PC-3 (cell line): ENCODE measurements at regions of chr16 and their contacts with region 1.

Region 1: DNA sequence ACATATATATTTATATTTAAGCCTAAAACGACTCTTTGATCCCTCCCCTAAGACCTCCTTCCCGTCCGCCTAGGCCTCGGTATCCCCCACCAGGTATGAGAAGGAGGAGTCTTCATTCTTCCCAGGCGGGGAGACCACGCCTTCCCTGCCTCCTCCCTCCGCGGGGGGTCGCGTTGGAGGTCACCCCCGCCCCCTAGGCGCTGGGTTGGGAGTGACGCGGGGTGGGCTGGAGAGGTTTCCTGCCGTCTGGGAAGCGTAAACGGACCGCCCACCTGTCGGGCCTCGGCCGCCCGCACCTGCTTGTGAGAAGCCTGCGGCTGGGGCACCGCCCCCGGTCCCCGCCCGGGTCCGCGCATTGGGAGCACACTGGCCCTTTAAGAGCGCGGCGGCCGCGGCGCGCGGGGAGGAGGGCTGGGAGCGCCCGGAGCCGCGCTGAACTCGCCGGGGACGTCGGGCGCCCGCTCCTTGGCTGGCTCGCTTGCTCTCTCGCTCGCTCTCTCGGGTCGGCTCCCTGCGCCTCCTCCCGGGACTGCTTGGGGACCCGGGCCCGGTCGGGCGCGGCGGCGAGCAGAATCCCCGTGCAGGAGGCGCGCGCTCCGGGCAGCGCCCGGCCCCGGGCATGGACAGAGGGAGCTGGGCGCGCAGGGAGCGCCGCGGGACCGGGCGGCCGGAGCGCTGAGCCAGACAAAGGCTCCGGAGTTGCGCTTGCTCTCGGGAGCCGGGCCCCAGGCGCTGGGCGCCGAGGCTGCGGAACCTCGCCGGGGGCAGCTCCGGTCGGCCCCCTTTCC is at the start of gene MMP15:
- DNase-seq: peak; percentile 68
- ATAC-seq: peak; percentile 60
- H3K4me3 ChIP-seq: peak within 1 kb of the TSS; percentile 69
- H3K27ac ChIP-seq: no peak within 1 kb of the TSS
- H3K4me1 ChIP-seq: peaks cover 29% of the 10 kb centered on the region
- H3K27me3 ChIP-seq: no peaks in the 10 kb centered on the region
- CTCF ChIP-seq: no peak
- total RNA-seq, gene MMP15: 6.3 and 9.4 TPM in 2 replicates

Region 2: DNA sequence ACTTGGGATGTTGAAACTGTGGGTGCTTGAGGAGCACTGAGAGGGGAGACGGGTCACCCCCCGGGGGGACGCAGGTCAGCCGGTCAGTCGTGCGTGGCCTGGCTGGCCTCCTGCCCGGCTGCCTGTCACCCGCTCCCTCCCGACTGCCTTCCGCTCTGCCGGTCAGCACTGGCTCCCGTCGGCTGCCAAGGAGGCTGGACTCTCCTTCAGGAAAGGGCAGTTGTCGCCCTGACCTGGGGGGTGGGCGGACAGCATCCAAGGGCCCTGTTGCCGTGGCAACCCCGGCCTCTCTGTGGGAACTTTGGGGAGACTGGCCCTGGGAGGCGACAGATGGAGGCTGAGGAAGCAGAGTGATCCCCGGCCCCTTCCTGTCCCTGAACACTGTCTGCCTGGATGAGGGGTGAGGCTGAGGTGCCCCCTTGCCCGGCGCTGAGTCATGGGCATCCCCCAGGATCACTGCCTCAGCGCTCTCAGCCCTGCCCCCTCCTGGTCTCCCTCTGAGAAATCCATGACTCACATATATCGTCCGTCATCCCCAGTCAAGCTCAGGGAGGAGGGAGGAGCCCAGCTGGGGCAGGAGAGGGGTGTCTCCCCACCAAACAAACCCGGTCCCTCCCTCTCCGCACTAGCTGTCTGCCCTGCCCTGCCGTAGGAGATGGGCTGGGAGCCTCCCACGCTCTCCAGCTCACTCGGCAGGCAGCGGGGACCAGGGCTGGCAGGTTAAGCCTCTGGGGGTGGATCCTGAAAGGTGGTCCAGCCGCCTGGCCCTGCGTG is 397.4 kb before region 1 on chr16 and contains the start of gene ADGRG1:
- CTCF ChIA-PET with region 1: no interaction called
- POLR2A ChIA-PET with region 1: interaction called, 13 read pairs
- intact Hi-C with region 1: no loop called
- DNase-seq: peak; percentile 92
- ATAC-seq: peak; percentile 76
- H3K4me3 ChIP-seq: peak within 1 kb of the TSS; percentile 71
- H3K27ac ChIP-seq: peak within 1 kb of the TSS; percentile 94
- H3K4me1 ChIP-seq: peaks cover 63% of the 10 kb centered on the region
- H3K27me3 ChIP-seq: no peaks in the 10 kb centered on the region
- CTCF ChIP-seq: peak; percentile 10; the same call in 1 of the 2 replicates
- total RNA-seq, gene ADGRG1: 33.7 and 41.5 TPM in 2 replicates

Region 3: DNA sequence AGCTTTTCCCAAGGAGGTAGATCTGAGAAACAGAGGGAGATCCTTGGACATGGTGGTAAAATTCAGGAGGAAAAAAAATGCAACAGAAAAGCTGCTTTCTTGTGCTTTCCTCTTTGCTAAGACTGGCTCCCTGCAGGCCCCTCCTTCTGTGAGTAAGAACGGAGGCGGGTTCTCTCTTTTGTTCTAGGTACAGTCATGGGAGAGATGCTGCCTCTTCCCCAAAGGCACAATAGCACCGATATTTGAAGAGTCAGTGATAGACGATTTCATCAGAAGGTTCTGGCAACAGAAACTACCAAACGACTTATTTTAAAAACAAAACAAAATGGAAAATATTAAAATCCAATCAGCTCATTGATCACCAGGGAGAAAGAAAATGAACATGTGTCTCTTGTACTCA is 190.6 kb before region 1 on chr16:
- CTCF ChIA-PET with region 1: no interaction called
- POLR2A ChIA-PET with region 1: no interaction called
- intact Hi-C with region 1: no loop called
- DNase-seq: peak; percentile 42
- ATAC-seq: peak; percentile 56
- H3K4me3 ChIP-seq: 0 out of 2 replicates have a peak overlapping the region, but pooled peaks have one; percentile 32
- H3K27ac ChIP-seq: no peak overlapping the region
- H3K4me1 ChIP-seq: peaks cover 8% of the 10 kb centered on the region
- H3K27me3 ChIP-seq: no peaks in the 10 kb centered on the region
- CTCF ChIP-seq: no peak

Region 4: DNA sequence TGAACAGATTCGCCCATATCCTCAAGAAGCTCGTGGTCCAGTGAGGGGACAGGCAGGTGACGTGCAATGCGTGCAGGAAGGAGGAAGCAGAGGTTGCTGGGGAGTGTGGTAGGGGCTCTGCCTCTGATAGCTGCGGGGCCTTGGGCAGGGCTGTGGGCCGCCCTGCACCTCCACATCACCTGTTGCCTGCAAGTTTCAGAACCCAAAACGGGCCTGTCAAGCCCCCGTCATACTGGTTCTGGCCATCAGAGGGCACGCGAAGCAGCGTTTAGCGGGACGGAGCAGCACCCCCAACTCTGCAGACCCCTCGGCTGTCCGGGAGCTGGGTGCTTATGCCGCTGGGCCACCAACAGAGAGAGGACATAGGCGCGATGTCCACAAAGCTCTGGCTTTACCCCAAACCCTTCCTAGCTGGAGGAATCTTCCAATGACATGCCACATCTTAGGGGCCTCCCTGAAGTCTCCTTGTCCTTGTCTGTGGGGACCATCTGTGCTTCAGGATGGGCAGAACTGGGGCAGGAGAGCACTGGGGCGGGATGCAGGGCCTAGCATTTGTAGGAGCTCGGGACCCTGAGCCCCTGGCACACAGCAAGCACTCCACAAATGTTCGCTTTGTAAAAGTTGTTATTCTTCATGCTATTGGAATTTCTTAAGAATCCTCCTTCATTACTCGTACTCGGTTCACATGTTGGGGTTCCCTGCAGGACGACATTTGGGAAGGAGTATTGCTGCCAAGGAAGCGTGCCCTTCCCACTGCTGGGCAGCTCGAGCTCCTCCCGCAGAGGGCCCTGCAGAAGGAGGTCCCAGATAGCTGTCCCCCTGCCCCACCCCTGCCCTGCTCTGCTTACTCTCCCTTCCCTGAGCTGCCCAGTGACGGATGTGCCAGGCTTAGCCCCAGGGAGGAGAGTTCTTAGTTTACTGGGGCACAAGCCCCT is 118.9 kb before region 1 on chr16:
- CTCF ChIA-PET with region 1: no interaction called
- POLR2A ChIA-PET with region 1: no interaction called
- intact Hi-C with region 1: no loop called
- DNase-seq: no peak
- ATAC-seq: no peak
- H3K4me3 ChIP-seq: no peak overlapping the region
- H3K27ac ChIP-seq: no peak overlapping the region
- H3K4me1 ChIP-seq: no peaks in the 10 kb centered on the region
- H3K27me3 ChIP-seq: no peaks in the 10 kb centered on the region
- CTCF ChIP-seq: no peak

Region 5: DNA sequence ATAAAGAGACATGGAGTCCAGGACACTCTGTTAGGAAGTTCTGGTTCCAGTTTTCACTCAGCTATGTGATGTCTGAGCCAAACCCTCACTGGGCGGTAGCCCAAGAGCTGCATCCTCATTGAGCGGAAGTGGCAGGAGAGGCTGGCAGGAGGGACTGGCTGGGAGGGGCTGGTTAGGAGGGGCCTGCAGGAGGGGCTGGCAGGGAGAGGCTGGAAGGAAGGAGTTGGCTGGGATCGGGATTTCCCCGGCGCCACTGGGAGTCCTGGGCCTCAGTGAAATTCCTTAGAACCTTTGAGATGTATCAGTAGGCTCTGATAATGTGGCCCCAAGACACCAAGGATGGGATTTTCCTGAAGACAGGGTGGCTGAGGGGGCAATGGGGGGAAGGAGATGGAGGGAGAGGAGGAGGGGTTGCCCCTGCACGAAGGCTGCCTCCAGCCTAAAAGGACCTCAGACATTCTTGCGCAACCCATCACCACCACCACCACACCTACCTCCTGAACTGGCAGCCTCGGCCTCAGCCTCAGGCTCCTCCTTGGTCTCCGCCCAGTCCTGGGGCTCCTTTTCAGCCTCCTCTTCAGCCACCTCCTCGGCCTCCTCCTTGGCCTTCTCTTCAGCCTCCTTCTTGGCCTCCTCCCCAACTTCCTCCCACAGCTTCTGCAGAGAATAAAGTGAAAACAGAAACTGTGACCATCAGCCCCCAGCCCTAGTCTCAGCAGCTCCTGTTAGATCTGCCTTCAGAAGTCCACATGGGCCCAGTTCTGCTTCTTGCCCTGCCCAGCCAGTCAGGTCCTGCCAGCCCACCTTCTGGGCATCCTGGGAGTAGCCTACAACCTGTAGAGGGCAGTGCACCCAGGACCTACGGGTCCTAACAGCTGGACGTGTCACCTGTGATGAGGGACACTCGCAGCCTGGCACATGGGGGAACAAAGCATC is 86.3 kb before region 1 on chr16:
- CTCF ChIA-PET with region 1: no interaction called
- POLR2A ChIA-PET with region 1: no interaction called
- intact Hi-C with region 1: no loop called
- DNase-seq: peak; percentile 47
- ATAC-seq: peak; percentile 92
- H3K4me3 ChIP-seq: no peak overlapping the region
- H3K27ac ChIP-seq: no peak overlapping the region
- H3K4me1 ChIP-seq: no peaks in the 10 kb centered on the region; the same call in 1 of the 2 replicates
- H3K27me3 ChIP-seq: no peaks in the 10 kb centered on the region
- CTCF ChIP-seq: peak; percentile 37

Region 6: GRCh38 chr16:58063377-58064076 is 38.0 kb after region 1 on chr16:
- CTCF ChIA-PET with region 1: no interaction called
- POLR2A ChIA-PET with region 1: no interaction called
- intact Hi-C with region 1: no loop called
- DNase-seq: no peak
- ATAC-seq: no peak
- H3K4me3 ChIP-seq: no peak overlapping the region
- H3K27ac ChIP-seq: no peak overlapping the region
- H3K4me1 ChIP-seq: no peaks in the 10 kb centered on the region
- H3K27me3 ChIP-seq: no peaks in the 10 kb centered on the region
- CTCF ChIP-seq: no peak

Region 7: GRCh38 chr16:58123896-58124600 is 98.5 kb after region 1 on chr16:
- CTCF ChIA-PET with region 1: interaction called, 5 read pairs
- POLR2A ChIA-PET with region 1: no interaction called
- intact Hi-C with region 1: loop called (anchors 2 kb)
- DNase-seq: no peak
- ATAC-seq: no peak
- H3K4me3 ChIP-seq: no peak overlapping the region
- H3K27ac ChIP-seq: no peak overlapping the region
- H3K4me1 ChIP-seq: peaks cover 39% of the 10 kb centered on the region
- H3K27me3 ChIP-seq: no peaks in the 10 kb centered on the region
- CTCF ChIP-seq: no peak

Region 8: GRCh38 chr16:58306327-58306726 is 280.8 kb after region 1 on chr16:
- CTCF ChIA-PET with region 1: no interaction called
- POLR2A ChIA-PET with region 1: no interaction called
- intact Hi-C with region 1: loop called (anchors 10 kb)
- DNase-seq: peak; percentile 11
- ATAC-seq: no peak
- H3K4me3 ChIP-seq: no peak overlapping the region
- H3K27ac ChIP-seq: no peak overlapping the region
- H3K4me1 ChIP-seq: no peaks in the 10 kb centered on the region
- H3K27me3 ChIP-seq: no peaks in the 10 kb centered on the region
- CTCF ChIP-seq: peak; percentile 50